AG04450 (cell line): ENCODE measurements at regions of chr10 and their contacts with region 1.

Region 1: DNA sequence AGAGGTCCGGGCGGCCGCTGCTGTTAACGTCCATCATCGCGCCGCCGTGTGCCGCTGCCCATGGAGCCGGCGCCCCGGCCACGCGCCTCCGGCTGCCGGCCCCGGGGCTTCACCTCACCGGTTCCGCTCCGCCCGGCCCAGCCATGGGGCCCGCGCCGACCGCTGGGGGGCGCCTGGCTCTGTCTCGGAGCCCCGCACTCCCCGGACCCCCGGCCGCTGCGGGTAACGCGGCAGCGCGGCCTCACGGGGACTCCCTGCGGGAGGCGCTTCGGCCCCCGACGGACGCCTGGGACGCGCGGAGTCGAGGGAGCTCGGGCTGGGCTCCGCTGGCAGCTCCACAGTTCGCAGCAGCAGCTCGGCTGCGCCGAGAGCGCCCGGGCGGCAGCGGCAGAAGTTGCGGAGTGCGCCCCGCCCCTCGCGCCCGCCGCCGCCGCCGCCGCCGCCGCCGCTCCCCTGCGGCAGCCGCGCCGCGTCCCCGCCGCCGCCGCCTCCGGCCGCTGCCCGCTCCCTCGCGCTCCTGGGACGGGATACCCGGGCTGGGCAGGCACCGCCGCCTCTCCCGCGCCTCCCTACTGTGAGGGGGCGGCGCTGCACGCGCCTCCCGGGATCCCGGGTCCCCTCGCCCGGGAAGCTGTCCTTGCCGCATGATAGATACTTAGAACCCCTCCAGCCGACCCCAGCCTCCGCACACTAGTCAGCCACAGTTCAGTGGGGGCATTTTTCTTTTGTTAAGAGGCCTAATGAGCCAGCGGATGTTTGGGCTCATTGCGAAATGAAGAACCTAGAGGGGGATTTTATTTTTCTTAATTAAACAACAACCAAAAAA is at the start of gene HTR7:
- DNase-seq: no peak
- H3K4me3 ChIP-seq: peak within 1 kb of the TSS; percentile 63
- H3K27ac ChIP-seq: peak within 1 kb of the TSS; percentile 65
- H3K27me3 ChIP-seq: peaks cover 5% of the 10 kb centered on the region
- CTCF ChIP-seq: peak; percentile 49
- polyA plus RNA-seq, gene HTR7: 1.1 TPM in 2 replicates

Region 2: GRCh38 chr10:90751107-90751997 is 106.5 kb before region 1 on chr10:
- CTCF ChIA-PET with region 1: interaction called, 249 read pairs
- POLR2A ChIA-PET with region 1: no interaction called
- DNase-seq: no peak
- H3K4me3 ChIP-seq: no peak overlapping the region
- H3K27ac ChIP-seq: no peak overlapping the region
- H3K27me3 ChIP-seq: no peaks in the 10 kb centered on the region
- CTCF ChIP-seq: peak; percentile 79